ENCODE measurements at regions of chr1 and their contacts with region 1.

Region 1: GRCh38 chr1:234309598-234310459 is 63.4 kb upstream of the COA6 start:
- ATAC-seq: peak; percentile 65 to 95 (median 86)
- H3K4me3 ChIP-seq: no peak overlapping the region
- H3K27ac ChIP-seq: no peak overlapping the region
- H3K4me1 ChIP-seq: peaks cover 0 to 2% of the 10 kb centered on the region in 2 donors

Region 2: DNA sequence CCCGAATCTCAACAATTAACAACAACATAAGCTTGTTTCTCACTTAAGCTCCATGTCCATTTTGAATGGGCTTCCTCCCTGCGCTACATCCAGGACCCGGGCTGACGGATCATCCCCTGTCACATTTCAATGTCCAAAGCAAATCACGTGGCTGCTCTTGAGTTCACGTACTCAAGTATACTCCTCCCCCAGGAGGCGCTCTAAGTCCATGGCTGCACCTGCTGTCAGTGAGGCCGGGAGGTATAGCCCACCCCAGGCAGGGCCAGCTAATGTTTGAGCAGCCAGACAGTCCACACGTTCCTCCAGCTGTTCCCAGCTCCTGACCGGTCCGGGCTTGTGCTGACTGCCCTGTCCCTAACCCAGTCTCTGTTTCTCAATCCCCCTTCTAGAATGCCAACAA is 184.5 kb before region 1 on chr1:
- in situ Hi-C with region 1: loop called in 3 of 9 experiments (anchors 25 kb)
- ATAC-seq: peak in 7 of 8 experiments; percentile 21 to 81 (median 63)
- H3K4me3 ChIP-seq: no peak overlapping the region
- H3K27ac ChIP-seq: no peak overlapping the region
- H3K4me1 ChIP-seq: peaks cover 2 to 18% of the 10 kb centered on the region in 2 donors